Esophagus muscularis mucosa (tissue), 4 donors: ENCODE measurements at regions of chr20 and their contacts with region 1.

Region 1: GRCh38 chr20:50794846-50795634 is at the start of gene BCAS4:
- DNase-seq: no peak
- H3K4me3 ChIP-seq: peak within 1 kb of the TSS; percentile 82 to 95 (median 91)
- H3K27ac ChIP-seq: peak within 1 kb of the TSS; percentile 75 to 81 (median 78)
- H3K4me1 ChIP-seq: peaks cover 29 to 38% (median 35%) of the 10 kb centered on the region in 4 donors
- H3K27me3 ChIP-seq: no peaks in the 10 kb centered on the region
- CTCF ChIP-seq: peak; percentile 88 to 98 (median 98)
- EP300 ChIP-seq: no peak
- POLR2A ChIP-seq: no peak
- total RNA-seq, gene BCAS4: 3.1 to 5.4 (median 4.5) TPM

Region 2: DNA sequence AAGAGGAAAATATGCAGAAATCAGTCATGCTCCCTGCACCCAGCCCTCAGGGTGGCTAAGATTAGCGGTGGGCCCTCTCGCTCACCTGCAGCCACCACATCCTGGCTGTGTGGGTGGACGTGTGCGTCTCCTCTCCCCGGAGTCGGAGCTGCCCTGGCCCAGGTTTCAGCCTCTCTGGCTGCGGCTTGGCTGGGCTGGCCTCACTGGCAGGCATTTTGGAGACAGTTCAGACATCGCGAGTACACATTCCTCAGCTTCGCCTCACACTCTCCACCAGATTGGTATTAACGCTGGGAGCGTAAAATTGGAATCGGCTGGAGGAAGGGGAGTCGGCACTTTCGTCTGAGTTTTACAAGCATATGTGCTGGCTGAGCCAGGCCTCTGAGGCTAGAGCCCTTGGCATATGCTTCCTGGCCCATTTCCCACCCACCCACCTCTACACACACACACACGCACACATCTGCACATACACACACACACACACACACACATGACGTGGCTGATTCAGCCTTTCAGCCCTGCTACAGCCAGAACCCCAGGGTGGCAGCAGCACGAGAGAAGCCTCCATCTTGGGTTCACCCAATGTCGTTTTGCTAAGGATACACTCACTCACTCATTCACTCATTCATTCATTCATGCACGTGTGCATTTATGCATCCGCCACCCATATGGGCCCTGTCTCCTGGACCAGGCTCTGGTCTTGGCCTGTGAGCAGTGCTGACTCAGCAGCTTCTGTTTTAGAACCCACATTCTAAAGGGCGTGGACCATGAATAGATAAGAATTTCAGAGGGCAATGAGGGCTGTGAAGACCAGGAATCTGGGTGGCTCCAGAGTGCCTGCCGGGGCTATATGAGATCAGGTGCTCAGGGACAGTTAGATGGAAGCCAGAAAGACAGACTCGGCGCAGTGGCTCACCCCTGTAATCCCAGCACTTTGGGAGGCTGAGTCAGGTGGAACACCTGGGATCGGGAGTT is 42.8 kb after region 1 on chr20:
- intact Hi-C with region 1: loop called (anchors 5 kb)
- DNase-seq: no peak
- H3K4me3 ChIP-seq: peak overlapping the region in 1 of 4 donors; percentile 19
- H3K27ac ChIP-seq: peak overlapping the region; percentile 64 to 78 (median 70)
- H3K4me1 ChIP-seq: peaks cover 0 to 21% (median 20%) of the 10 kb centered on the region in 4 donors
- H3K27me3 ChIP-seq: no peaks in the 10 kb centered on the region
- CTCF ChIP-seq: no peak
- EP300 ChIP-seq: no peak
- POLR2A ChIP-seq: no peak

Region 3: GRCh38 chr20:50856036-50856756 is 61.2 kb after region 1 on chr20:
- intact Hi-C with region 1: no loop called
- DNase-seq: no peak
- H3K4me3 ChIP-seq: no peak overlapping the region
- H3K27ac ChIP-seq: no peak overlapping the region
- H3K4me1 ChIP-seq: peaks cover 0 to 7% (median 3%) of the 10 kb centered on the region in 4 donors
- H3K27me3 ChIP-seq: no peaks in the 10 kb centered on the region
- CTCF ChIP-seq: no peak
- EP300 ChIP-seq: no peak
- POLR2A ChIP-seq: no peak

Region 4: GRCh38 chr20:50929299-50930138 is 134.5 kb after region 1 on chr20:
- intact Hi-C with region 1: loop called (anchors 2 kb)
- DNase-seq: peak; percentile 96
- H3K4me3 ChIP-seq: peak overlapping the region; percentile 73 to 94 (median 87)
- H3K27ac ChIP-seq: peak overlapping the region; percentile 78 to 99 (median 83)
- H3K4me1 ChIP-seq: peaks cover 41 to 66% (median 62%) of the 10 kb centered on the region in 4 donors
- H3K27me3 ChIP-seq: peaks cover 0 to 4% (median 0%) of the 10 kb centered on the region in 4 donors
- CTCF ChIP-seq: peak; percentile 82 to 84 (median 83)
- EP300 ChIP-seq: no peak
- POLR2A ChIP-seq: no peak